Endothelial cell of umbilical vein (primary cell): ENCODE measurements at regions of chr15 and their contacts with region 1.

Region 1: GRCh38 chr15:37262922-37263608 is 162.7 kb upstream of the MEIS2 start:
- DNase-seq: no peak
- H3K4me3 ChIP-seq: no peak overlapping the region
- H3K27ac ChIP-seq: no peak overlapping the region
- H3K4me1 ChIP-seq: no peaks in the 10 kb centered on the region
- H3K27me3 ChIP-seq: no peaks in the 10 kb centered on the region
- CTCF ChIP-seq: no peak
- POLR2A ChIP-seq: no peak

Region 2: DNA sequence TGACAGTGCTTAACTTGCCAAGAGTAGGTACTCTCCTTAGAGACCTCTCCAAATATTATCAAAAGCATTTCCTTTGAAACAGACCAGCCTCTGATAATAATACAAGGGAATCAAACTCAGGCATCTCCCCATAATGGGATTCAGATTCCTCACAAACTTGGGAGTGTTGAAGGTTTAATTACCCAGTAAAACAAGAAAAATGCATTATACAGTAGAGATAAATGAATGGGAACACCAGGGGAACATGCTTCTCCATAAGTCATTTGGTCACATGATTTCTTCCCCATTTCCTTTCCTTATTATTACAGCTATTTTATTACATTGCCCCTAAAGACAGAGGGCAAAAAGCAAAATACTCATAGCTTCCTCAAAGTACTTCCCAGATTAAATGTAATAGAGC is 1008.6 kb before region 1 on chr15:
- CTCF ChIA-PET with region 1: no interaction called
- POLR2A ChIA-PET with region 1: no interaction called
- dilution Hi-C with region 1: no loop called
- intact Hi-C with region 1: no loop called
- DNase-seq: peak; percentile 50
- H3K4me3 ChIP-seq: no peak overlapping the region
- H3K27ac ChIP-seq: no peak overlapping the region
- H3K4me1 ChIP-seq: no peaks in the 10 kb centered on the region
- H3K27me3 ChIP-seq: peaks cover 0 to 3% of the 10 kb centered on the region in 2 experiments
- CTCF ChIP-seq: no peak
- POLR2A ChIP-seq: no peak

Region 3: GRCh38 chr15:37204692-37205091 is 58.4 kb before region 1 on chr15:
- CTCF ChIA-PET with region 1: no interaction called
- POLR2A ChIA-PET with region 1: no interaction called
- dilution Hi-C with region 1: no loop called
- intact Hi-C with region 1: loop called (anchors 10 kb)
- DNase-seq: no peak
- H3K4me3 ChIP-seq: no peak overlapping the region
- H3K27ac ChIP-seq: no peak overlapping the region
- H3K4me1 ChIP-seq: no peaks in the 10 kb centered on the region
- H3K27me3 ChIP-seq: no peaks in the 10 kb centered on the region
- CTCF ChIP-seq: no peak
- POLR2A ChIP-seq: no peak